ENCODE measurements at regions of chr1 and their contacts with region 1.

Region 1: GRCh38 chr1:40385437-40386358 is 12.2 kb downstream of the SMAP2 start:
- DNase-seq: peak in 13 of 14 experiments; percentile 19 to 95 (median 49)
- ATAC-seq: peak; percentile 69
- H3K4me3 ChIP-seq: peak overlapping the region; percentile 42
- H3K4me3 Mint-ChIP-seq: peak overlapping the region; percentile 83
- H3K27ac ChIP-seq: peak overlapping the region; percentile 92 to 95
- H3K27ac Mint-ChIP-seq: peak overlapping the region; percentile 96
- H3K4me1 ChIP-seq: peaks cover 86% of the 10 kb centered on the region
- H3K4me1 Mint-ChIP-seq: peaks cover 87% of the 10 kb centered on the region
- H3K27me3 ChIP-seq: no peaks in the 10 kb centered on the region
- H3K27me3 Mint-ChIP-seq: no peaks in the 10 kb centered on the region
- CTCF ChIP-seq: no peak

Region 2: GRCh38 chr1:40315239-40315794 is 70.4 kb before region 1 on chr1:
- CTCF ChIA-PET with region 1: interaction called, 6 read pairs
- POLR2A ChIA-PET with region 1: interaction called, 24 read pairs
- intact Hi-C with region 1: no loop called
- DNase-seq: peak; percentile 78 to 94 (median 84)
- ATAC-seq: peak; percentile 84
- H3K4me3 ChIP-seq: peak overlapping the region; percentile 77
- H3K4me3 Mint-ChIP-seq: peak overlapping the region; percentile 90
- H3K27ac ChIP-seq: no peak overlapping the region
- H3K27ac Mint-ChIP-seq: peak overlapping the region; percentile 64
- H3K4me1 ChIP-seq: peaks cover 51% of the 10 kb centered on the region
- H3K4me1 Mint-ChIP-seq: peaks cover 37% of the 10 kb centered on the region
- H3K27me3 ChIP-seq: peaks cover 0 to 11% of the 10 kb centered on the region in 2 experiments
- H3K27me3 Mint-ChIP-seq: peaks cover 24% of the 10 kb centered on the region
- CTCF ChIP-seq: peak; percentile 79

Region 3: GRCh38 chr1:40344597-40344996 is 41.1 kb before region 1 on chr1:
- CTCF ChIA-PET with region 1: interaction called, 29 read pairs
- POLR2A ChIA-PET with region 1: interaction called, 21 read pairs
- intact Hi-C with region 1: no loop called
- DNase-seq: peak in 8 of 14 experiments; percentile 7 to 64 (median 26)
- ATAC-seq: peak; percentile 80
- H3K4me3 ChIP-seq: no peak overlapping the region
- H3K4me3 Mint-ChIP-seq: peak overlapping the region; percentile 27
- H3K27ac ChIP-seq: no peak overlapping the region
- H3K27ac Mint-ChIP-seq: peak overlapping the region; percentile 45
- H3K4me1 ChIP-seq: peaks cover 27% of the 10 kb centered on the region
- H3K4me1 Mint-ChIP-seq: peaks cover 49% of the 10 kb centered on the region
- H3K27me3 ChIP-seq: no peaks in the 10 kb centered on the region
- H3K27me3 Mint-ChIP-seq: no peaks in the 10 kb centered on the region
- CTCF ChIP-seq: no peak

Region 4: DNA sequence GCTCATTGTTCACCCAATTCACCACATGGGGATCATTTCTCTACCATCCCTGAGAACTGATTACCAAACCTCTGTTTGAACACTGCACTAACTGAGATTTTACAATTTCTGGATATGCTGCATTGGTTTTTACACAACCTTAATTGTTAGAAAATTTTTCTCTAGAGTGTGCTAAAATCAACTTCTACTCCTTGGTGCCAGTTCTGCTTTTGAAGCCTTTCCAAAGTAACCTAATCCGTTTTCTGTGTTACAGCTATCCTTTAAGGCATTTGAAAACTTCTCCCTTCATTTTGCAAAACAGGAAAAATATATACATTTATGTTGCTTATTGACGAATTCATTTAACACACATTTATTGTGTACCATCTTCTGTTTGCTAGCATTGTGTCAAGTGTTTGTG is 11.6 kb after region 1 on chr1:
- CTCF ChIA-PET with region 1: interaction called, 9 read pairs
- POLR2A ChIA-PET with region 1: interaction called, 67 read pairs
- intact Hi-C with region 1: loop called in 1 of 2 experiments (anchors 1 kb)
- DNase-seq: no peak
- ATAC-seq: no peak
- H3K4me3 ChIP-seq: no peak overlapping the region
- H3K4me3 Mint-ChIP-seq: peak overlapping the region; percentile 52
- H3K27ac ChIP-seq: peak overlapping the region; percentile 57 to 76
- H3K27ac Mint-ChIP-seq: peak overlapping the region; percentile 96
- H3K4me1 ChIP-seq: peaks cover 79% of the 10 kb centered on the region
- H3K4me1 Mint-ChIP-seq: peaks cover 89% of the 10 kb centered on the region
- H3K27me3 ChIP-seq: no peaks in the 10 kb centered on the region
- H3K27me3 Mint-ChIP-seq: no peaks in the 10 kb centered on the region
- CTCF ChIP-seq: no peak

Region 5: GRCh38 chr1:40404670-40405462 is 19.2 kb after region 1 on chr1:
- CTCF ChIA-PET with region 1: interaction called, 38 read pairs
- POLR2A ChIA-PET with region 1: interaction called, 51 read pairs
- intact Hi-C with region 1: loop called in 1 of 2 experiments (anchors 1 kb)
- DNase-seq: peak in 7 of 14 experiments; percentile 25 to 86 (median 65)
- ATAC-seq: peak; percentile 81
- H3K4me3 ChIP-seq: no peak overlapping the region
- H3K4me3 Mint-ChIP-seq: peak overlapping the region; percentile 50
- H3K27ac ChIP-seq: peak overlapping the region; percentile 33 to 48
- H3K27ac Mint-ChIP-seq: peak overlapping the region; percentile 86
- H3K4me1 ChIP-seq: peaks cover 47% of the 10 kb centered on the region
- H3K4me1 Mint-ChIP-seq: peaks cover 63% of the 10 kb centered on the region
- H3K27me3 ChIP-seq: no peaks in the 10 kb centered on the region
- H3K27me3 Mint-ChIP-seq: no peaks in the 10 kb centered on the region
- CTCF ChIP-seq: peak; percentile 94